ENCODE measurements at regions of chr7 and their contacts with region 1.

Region 1: DNA sequence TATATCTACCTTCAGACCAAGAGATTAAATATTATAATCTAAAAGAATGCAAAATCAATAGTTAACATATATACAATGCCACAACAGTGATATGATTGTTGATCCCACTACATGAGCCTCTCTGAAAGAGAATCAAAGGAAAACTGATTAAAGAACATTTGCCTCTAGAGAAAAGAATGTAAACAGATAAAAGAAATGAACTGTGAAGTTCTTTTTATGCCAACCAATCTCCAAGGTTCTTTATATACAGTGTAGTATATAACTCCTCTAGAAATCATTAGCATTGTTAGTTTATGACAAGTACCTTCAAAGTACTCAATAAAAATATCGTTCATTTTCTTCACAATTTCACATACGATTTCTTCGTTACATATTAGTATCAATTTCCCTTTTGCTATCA is 20.1 kb downstream of the CNOT4 start:
- DNase-seq: no peak

Region 2: DNA sequence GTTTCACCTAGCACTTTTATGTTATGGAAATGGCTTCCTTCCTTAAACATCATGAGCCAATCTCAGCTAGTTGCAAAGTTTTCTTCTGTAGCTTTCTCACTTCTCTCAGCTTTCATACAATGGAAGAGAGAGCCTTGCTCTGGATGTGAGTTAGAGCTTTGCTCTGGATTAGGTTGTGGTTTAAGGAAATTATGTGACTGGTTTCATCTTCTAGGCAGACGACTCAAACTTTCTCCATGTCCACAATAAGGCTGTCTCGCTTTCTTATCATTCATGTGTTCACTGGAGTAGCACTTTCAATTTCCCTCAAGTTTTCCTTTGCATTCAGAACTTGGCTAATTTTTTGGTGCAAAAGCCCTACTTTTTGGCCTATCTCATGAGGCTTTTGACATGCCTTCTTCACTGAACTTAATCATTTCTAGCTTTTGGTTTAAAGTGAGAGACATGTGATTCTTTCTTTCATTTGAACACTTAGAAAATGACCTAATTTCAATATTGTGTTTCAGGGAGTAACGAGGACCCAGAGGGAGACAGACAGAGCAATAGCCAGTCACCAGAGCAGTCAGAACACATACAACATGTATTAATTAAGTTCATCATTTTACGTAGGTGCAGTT is 29.7 kb before region 1 on chr7:
- intact Hi-C with region 1: loop called in 1 of 2 experiments (anchors 2 kb)
- DNase-seq: no peak